Mammary epithelial cell (primary cell): ENCODE measurements at regions of chr2 and their contacts with region 1.

Region 1: GRCh38 chr2:36376319-36376765 is 20.8 kb downstream of the CRIM1 start:
- DNase-seq: no peak
- H3K4me3 ChIP-seq: no peak overlapping the region
- H3K27ac ChIP-seq: peak overlapping the region; percentile 9
- H3K4me1 ChIP-seq: peaks cover 95% of the 10 kb centered on the region
- H3K27me3 ChIP-seq: no peaks in the 10 kb centered on the region
- CTCF ChIP-seq: no peak

Region 2: GRCh38 chr2:36362291-36362690 is 14.1 kb before region 1 on chr2:
- CTCF ChIA-PET with region 1: interaction called, 13 read pairs
- dilution Hi-C with region 1: no loop called
- in situ Hi-C with region 1: no loop called
- intact Hi-C with region 1: loop called (anchors 1 kb)
- DNase-seq: peak; percentile 83
- H3K4me3 ChIP-seq: no peak overlapping the region
- H3K27ac ChIP-seq: peak overlapping the region; percentile 80
- H3K4me1 ChIP-seq: peaks cover 71% of the 10 kb centered on the region
- H3K27me3 ChIP-seq: no peaks in the 10 kb centered on the region
- CTCF ChIP-seq: no peak

Region 3: DNA sequence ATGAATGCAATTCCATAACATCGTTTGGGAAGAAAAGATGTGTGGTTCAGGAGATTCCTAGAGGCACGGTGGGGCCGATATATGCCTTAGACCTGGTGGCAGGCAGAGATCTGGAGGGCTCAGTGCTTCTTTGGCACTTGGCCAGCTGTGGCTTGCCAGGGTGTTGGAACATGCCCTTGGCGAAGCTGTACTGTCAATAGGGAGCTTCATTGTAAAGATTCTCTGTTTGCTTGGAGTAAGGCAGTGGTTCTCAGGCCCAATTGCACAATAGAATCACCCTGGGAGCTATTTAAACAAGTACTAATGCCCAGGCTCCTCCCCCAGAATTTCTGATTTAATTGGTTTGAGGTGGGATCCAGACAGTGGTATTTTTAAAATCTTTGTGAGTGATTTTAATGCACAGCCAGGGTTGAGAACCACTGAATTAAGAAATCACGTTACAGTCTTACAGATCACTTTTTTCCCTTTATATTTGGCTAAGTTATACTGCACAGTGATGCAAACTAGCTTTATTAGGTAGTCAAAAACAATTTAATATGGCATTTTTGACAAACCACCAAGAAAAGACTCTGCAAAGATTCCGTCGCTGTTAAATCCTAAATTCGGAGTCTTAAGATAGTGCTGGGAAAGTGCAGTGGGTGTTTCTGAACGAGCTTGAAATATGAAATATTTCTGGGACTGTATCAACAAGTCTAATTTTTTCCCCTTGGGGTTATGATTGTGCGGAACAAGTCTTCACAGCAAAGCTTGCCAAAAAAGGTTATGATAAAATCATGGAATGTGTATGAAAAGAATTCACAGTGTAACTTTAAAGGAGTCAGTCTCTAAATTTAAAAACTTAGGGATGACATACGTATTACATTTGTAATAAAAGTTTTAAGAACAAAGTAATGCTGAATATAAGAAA is 57.2 kb after region 1 on chr2:
- CTCF ChIA-PET with region 1: no interaction called
- dilution Hi-C with region 1: no loop called
- in situ Hi-C with region 1: loop called in 1 of 2 experiments (anchors 5 kb)
- intact Hi-C with region 1: loop called (anchors 1 kb)
- DNase-seq: peak; percentile 88
- H3K4me3 ChIP-seq: peak overlapping the region in 2 of 3 experiments; percentile 32 to 33
- H3K27ac ChIP-seq: peak overlapping the region; percentile 81
- H3K4me1 ChIP-seq: peaks cover 32% of the 10 kb centered on the region
- H3K27me3 ChIP-seq: no peaks in the 10 kb centered on the region
- CTCF ChIP-seq: no peak